Psoas muscle (tissue), 8 donors: ENCODE measurements at regions of chr12 and their contacts with region 1.

Region 1: GRCh38 chr12:67268896-67269631 is at the start of gene CAND1:
- DNase-seq: peak; percentile 98
- ATAC-seq: peak; percentile 88 to 94 (median 91)
- H3K4me3 ChIP-seq: peak within 1 kb of the TSS; percentile 93
- H3K27ac ChIP-seq: peak within 1 kb of the TSS; percentile 93
- H3K4me1 ChIP-seq: peaks cover 25% of the 10 kb centered on the region
- H3K27me3 ChIP-seq: no peaks in the 10 kb centered on the region
- CTCF ChIP-seq: peak; percentile 4
- total RNA-seq, gene CAND1: 27.9 to 48.6 (median 32.9) TPM

Region 2: DNA sequence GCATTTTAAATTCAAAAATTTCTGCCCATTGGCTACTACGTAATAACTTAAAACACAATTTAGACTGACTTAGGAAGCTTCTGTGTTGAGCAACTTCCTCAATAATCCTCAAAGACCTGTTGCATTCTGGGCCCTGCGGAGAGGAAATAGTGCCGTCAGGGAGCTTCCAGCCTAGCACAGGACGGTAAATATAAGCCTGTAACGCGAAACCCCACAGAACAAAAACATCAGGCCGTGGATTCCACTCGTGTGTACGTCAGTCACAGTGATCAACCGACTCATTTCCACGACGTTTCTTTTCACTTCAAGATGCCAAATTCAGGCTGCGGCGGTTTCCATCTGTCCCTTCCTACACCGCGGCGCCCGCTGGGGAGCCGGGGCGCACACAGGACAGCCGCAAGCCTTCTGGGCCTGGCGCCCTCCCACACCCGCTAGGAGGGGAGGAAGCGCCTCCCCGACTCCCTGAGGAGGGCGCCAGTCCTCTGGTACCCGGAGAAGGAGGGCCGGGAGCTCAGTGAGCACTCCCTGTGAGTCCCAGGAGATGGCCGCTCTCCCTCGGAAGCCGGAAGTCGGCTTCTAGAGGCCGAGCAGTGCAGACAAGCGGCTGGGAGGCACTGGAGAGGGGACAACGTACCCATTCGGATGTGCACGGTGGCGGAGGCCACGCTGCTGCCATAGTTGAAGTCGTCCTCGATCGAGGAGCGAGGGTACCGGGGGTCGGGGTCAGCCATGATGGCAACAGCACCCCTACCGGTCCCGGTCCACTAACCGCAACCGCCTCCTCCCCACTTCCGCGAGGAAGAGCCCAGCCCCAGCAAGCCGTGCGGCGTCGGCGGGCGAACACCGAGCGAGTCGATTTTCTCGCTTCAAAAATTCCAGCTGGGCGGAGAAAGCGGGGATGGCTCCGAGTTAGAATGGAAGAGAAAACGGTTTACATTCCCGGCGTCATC is 1099.6 kb before region 1 on chr12 and contains the start of gene TMBIM4:
- intact Hi-C with region 1: loop called in 1 of 2 experiments (anchors 5 kb)
- DNase-seq: peak; percentile 88 to 94
- ATAC-seq: peak; percentile 94 to 96 (median 95)
- H3K4me3 ChIP-seq: peak within 1 kb of the TSS; percentile 98
- H3K27ac ChIP-seq: peak within 1 kb of the TSS; percentile 100
- H3K4me1 ChIP-seq: peaks cover 13% of the 10 kb centered on the region
- H3K27me3 ChIP-seq: no peaks in the 10 kb centered on the region
- CTCF ChIP-seq: peak; percentile 56
- total RNA-seq, gene TMBIM4: 35.1 to 60.1 (median 42.3) TPM

Region 3: DNA sequence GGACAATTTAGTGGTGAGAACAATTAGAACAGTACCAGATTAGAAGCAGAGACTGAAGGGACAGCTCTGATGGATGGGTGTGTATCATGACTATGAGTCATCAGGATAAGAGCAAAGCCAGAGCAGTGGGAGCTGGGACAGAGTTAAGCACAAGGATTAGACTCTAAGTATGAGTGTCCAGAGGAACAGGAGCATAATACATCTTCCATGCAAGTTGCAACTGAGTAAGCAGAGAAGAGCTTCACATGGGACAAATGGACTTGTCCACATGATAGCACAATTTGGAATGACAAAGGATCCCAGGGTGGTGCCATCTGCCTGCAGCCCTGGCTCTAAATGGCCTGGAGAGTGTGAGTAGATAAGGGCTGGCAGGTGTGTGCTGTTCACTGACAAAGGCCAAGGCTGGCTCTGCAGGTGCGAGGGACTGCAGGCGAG is 226.3 kb before region 1 on chr12:
- intact Hi-C with region 1: no loop called
- DNase-seq: no peak
- ATAC-seq: peak in 3 of 4 donors; percentile 56 to 71 (median 69)
- H3K4me3 ChIP-seq: no peak overlapping the region
- H3K27ac ChIP-seq: no peak overlapping the region
- H3K4me1 ChIP-seq: no peaks in the 10 kb centered on the region
- H3K27me3 ChIP-seq: no peaks in the 10 kb centered on the region
- CTCF ChIP-seq: no peak

Region 4: DNA sequence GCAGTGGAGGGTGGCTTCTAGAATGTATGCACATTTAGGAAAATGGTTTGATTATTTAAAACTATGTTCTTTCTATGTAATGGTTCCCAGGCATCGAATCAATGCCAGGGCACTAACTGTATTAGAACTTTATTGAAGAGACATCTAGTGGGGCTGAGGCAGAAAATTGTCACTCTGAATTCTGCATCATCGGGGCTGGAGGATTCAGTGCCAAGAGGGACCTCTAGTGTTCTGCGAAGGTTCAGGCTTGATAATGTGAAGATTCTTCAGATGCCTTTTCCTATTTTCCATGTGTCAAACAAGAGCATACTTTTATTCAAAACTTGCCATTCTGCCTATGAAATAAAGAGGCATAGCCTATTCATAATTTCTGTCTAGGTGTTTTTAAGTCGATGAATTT is 146.4 kb after region 1 on chr12:
- intact Hi-C with region 1: loop called in 1 of 2 experiments (anchors 5 kb)
- DNase-seq: no peak
- ATAC-seq: peak; percentile 69 to 78 (median 74)
- H3K4me3 ChIP-seq: no peak overlapping the region
- H3K27ac ChIP-seq: no peak overlapping the region
- H3K4me1 ChIP-seq: peaks cover 32% of the 10 kb centered on the region
- H3K27me3 ChIP-seq: no peaks in the 10 kb centered on the region
- CTCF ChIP-seq: peak; percentile 55

Region 5: GRCh38 chr12:68686595-68687521 is 1417.8 kb after region 1 on chr12 and contains the start of gene NUP107:
- intact Hi-C with region 1: loop called in 1 of 2 experiments (anchors 5 kb)
- DNase-seq: peak; percentile 99 to 100
- ATAC-seq: peak; percentile 99 to 100 (median 99)
- H3K4me3 ChIP-seq: peak within 1 kb of the TSS; percentile 86
- H3K27ac ChIP-seq: peak within 1 kb of the TSS; percentile 81
- H3K4me1 ChIP-seq: peaks cover 14% of the 10 kb centered on the region
- H3K27me3 ChIP-seq: no peaks in the 10 kb centered on the region
- CTCF ChIP-seq: peak; percentile 11
- total RNA-seq, gene NUP107: 17.6 to 21.1 (median 20.2) TPM